ENCODE measurements at regions of chr2 and their contacts with region 1.

Region 1: DNA sequence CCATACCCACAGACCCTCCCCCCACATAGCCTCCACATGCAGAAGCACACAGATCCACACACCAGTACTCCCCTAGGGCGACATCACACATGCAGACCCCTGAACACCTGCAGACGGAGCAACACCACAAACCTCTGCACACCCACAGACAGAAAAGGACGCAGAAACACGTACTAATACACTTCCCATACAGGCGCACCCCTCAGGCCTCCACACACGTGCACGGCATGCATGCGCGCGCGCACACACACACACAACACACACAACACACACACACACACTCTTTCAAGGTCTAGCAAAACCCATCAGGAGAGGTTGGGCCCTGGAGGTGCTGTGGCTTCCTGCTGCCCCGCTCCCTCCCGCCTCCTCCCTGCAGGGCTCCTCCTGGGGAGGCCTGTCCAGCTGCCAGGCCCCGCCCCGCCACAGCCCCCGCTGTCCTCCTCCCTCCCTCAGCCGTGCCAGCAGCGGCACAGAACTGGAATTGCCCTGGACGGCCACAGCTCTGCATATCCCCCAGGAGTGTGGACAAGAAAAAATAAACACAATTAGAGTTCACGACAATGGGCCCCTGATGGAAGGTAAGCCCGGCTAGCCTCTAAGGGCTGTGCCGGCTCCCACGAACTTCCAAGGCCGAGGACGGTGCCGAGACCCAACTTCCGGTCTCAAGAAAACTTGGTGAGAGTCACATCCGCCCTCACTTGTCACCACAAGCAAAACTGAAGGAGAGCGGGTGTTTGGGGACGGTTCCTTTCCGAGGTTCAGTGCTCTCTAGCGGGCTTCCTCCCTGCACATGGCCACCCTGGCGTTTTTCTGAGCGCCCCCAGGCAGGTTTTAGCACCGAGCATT is 6.8 kb downstream of the ZFP36L2 start:
- DNase-seq: peak; percentile 91 to 93
- ATAC-seq: peak; percentile 71 to 78 (median 73)
- H3K4me3 ChIP-seq: peak overlapping the region; percentile 75
- H3K27ac ChIP-seq: peak overlapping the region; percentile 91
- H3K4me1 ChIP-seq: peaks cover 58% of the 10 kb centered on the region
- H3K27me3 ChIP-seq: no peaks in the 10 kb centered on the region
- CTCF ChIP-seq: no peak

Region 2: DNA sequence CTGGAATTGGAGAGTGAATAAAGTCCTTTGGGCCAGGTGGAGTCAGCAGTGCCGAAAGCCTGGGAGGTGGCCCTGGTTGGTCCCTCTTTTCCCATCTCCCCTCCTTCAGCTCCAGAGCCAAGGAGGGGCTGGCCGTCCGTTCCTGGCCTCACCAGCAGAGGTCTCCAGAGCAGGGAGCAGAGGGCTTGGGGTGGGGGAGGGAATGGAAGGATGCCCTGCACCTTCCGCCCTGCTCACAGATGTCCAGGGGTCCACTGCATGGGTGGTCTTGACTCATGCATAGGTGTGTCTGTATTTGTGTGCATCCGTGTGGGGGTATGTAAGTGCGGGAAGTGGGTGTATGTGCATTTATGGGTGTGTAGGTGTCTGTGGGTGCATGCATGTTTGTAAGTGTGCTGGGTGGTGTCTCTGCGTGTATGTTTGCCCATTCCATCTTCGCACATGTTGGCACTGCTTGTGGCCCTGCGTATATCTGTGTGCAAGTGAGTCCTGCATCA is 195.0 kb before region 1 on chr2:
- intact Hi-C with region 1: loop called in 1 of 2 experiments (anchors 2 kb)
- DNase-seq: peak; percentile 72 to 74
- ATAC-seq: peak; percentile 77 to 87 (median 86)
- H3K4me3 ChIP-seq: no peak overlapping the region
- H3K27ac ChIP-seq: no peak overlapping the region
- H3K4me1 ChIP-seq: no peaks in the 10 kb centered on the region
- H3K27me3 ChIP-seq: no peaks in the 10 kb centered on the region
- CTCF ChIP-seq: peak; percentile 76

Region 3: DNA sequence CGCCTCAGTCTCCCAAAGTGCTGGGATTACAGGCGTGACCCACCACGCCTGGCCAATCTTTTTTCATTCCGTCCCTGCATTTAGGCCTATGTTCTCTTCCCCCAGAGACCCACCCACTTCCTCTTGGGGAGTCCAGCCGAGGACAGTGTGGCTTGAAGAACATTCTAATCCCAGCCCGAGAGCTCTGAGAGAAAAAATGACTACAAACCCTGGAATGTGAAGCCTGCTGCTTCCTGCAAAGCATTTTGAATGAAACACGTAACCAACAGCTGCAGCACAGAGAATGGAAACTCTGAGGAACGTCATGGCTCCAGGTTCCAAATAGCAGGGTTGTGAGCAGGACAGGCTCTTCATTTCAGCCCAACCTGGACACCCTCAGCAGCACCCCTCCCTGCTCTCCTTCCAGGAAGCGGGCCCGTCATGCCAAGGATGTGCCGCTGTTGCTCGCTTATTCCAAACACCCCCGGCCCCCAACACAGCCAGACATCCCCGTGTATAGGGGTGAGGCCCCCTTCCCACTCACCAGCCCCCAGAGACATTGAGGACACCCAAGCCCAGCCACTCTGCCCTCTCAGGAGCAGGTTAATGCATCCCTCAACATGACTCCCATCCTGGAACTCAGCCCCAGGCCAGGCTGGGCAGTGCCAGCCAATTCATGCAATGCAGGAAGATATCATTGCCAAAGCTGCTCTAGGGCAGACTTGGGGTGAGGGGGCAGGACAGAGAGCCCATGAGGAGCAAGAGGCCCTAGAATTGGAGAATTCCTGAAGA is 133.0 kb before region 1 on chr2:
- intact Hi-C with region 1: loop called in 1 of 2 experiments (anchors 5 kb)
- DNase-seq: peak; percentile 77 to 88
- ATAC-seq: peak; percentile 72 to 84 (median 82)
- H3K4me3 ChIP-seq: no peak overlapping the region
- H3K27ac ChIP-seq: peak overlapping the region; percentile 80
- H3K4me1 ChIP-seq: peaks cover 54% of the 10 kb centered on the region
- H3K27me3 ChIP-seq: no peaks in the 10 kb centered on the region
- CTCF ChIP-seq: no peak

Region 4: GRCh38 chr2:43178602-43179542 is 40.7 kb before region 1 on chr2:
- intact Hi-C with region 1: loop called (anchors 2 kb)
- DNase-seq: peak; percentile 88 to 94
- ATAC-seq: peak; percentile 95 to 97 (median 96)
- H3K4me3 ChIP-seq: peak overlapping the region; percentile 54
- H3K27ac ChIP-seq: peak overlapping the region; percentile 95
- H3K4me1 ChIP-seq: peaks cover 25% of the 10 kb centered on the region
- H3K27me3 ChIP-seq: no peaks in the 10 kb centered on the region
- CTCF ChIP-seq: no peak